Natural killer cell (primary cell): ENCODE measurements at regions of chr11 and their contacts with region 1.

Region 1: DNA sequence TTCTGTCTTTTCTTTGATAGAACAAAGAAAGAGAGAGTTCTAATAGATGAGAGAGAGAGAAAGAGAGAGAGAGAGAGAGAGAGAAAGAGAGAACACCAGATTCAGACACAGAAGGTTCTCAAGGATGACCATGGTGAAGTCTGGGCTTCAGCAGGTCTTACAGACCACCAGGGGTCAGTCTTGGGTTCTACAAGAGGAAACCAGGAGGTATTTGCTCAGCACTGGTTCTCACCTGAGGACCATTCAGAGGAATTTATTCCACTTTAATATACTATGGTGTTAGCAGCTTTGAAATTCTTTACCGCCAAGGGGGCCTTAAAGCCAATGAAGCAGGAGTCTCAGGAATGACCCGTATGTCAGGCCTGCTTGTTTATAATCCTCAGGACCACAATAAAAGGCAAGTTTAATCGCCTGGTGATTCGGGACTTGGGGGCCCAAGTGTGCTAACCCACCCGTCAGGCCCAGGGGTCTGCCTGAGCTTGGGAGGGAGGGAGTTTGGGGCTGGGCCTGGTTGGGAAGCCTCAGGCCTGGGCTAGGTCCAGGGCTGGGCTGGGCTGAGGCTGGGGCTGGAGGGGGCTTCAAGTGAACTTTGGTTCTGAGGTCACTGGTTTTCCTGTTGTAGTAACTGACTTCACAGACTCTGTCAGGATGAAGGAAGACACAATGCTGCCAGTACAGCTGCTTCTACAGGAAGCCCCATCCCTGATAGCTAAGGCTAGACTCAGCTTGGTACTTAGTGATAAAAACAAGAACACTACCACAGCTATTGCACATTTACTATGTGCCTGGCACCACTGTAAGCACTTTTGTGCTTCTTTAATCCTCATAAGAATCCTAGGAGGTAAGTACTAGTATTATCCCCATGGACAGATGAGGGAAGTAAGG is 179.2 kb upstream of the ZBED5 start:
- DNase-seq: peak in 1 of 2 donors; percentile 86
- ATAC-seq: peak in 1 of 3 donors; percentile 66
- H3K4me3 ChIP-seq: no peak overlapping the region
- H3K4me3 Mint-ChIP-seq: no peak overlapping the region
- H3K27ac ChIP-seq: no peak overlapping the region
- H3K27ac Mint-ChIP-seq: no peak overlapping the region
- H3K4me1 ChIP-seq: no peaks in the 10 kb centered on the region
- H3K4me1 Mint-ChIP-seq: no peaks in the 10 kb centered on the region
- H3K27me3 ChIP-seq: peaks cover 4% of the 10 kb centered on the region
- H3K27me3 Mint-ChIP-seq: peaks cover 4 to 17% of the 10 kb centered on the region in 2 donors
- CTCF ChIP-seq: peak; percentile 47

Region 2: GRCh38 chr11:11265994-11266606 is 229.0 kb after region 1 on chr11:
- intact Hi-C with region 1: loop called (anchors 10 kb)
- DNase-seq: peak; percentile 26 to 70
- ATAC-seq: peak in 1 of 3 donors; percentile 70
- H3K4me3 ChIP-seq: no peak overlapping the region
- H3K4me3 Mint-ChIP-seq: no peak overlapping the region
- H3K27ac ChIP-seq: no peak overlapping the region
- H3K27ac Mint-ChIP-seq: no peak overlapping the region
- H3K4me1 ChIP-seq: no peaks in the 10 kb centered on the region
- H3K4me1 Mint-ChIP-seq: no peaks in the 10 kb centered on the region
- H3K27me3 ChIP-seq: no peaks in the 10 kb centered on the region
- H3K27me3 Mint-ChIP-seq: peaks cover 6 to 8% of the 10 kb centered on the region in 2 donors
- CTCF ChIP-seq: peak; percentile 45